Activated T-helper 2 cell treated with anti-CD3 and anti-CD28 coated beads, Interferon-gamma antibody, Interleukin-2, Interleukin-4, amounts not matched to agents 10 μg/mL and 5 μg/mL and 100 μg/mL, durations not matched to agents 14 hours and 24 hours and 36 hours (primary cell): ENCODE measurements at regions of chr2 and their contacts with region 1.

Region 1: DNA sequence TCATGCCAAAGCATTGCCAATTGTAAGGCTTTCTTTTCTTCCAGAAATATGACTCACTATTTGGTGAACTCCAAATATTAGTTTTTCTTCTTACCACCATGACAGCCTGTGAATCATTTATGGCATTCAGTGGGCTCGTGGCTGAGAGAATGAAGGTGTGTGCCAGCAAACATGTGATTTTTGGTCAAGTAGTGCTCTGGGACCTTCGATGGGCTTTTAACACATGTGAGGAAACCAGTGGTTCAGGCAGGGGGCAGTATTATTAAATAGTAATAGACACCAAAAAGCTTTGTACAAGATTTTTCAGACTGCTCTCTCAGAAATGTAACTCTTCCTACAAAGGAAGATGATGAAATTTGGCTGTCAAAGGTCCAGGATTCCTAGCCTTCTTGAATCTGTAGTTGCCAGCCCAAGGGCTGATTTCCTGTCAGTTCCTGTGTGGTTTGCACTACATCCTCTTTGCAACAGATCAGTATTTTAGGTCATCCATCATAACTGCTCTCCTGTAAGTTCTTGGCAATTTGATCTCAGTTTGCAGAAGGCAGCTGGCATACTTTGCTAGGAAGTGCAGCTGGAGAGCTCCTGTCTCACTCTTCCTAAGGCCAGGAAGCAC is 64.3 kb downstream of the BABAM2 start:
- DNase-seq: no peak
- H3K4me3 Mint-ChIP-seq: peak overlapping the region; percentile 53
- H3K27ac Mint-ChIP-seq: peak overlapping the region; percentile 72
- H3K4me1 Mint-ChIP-seq: peaks cover 81% of the 10 kb centered on the region
- H3K27me3 Mint-ChIP-seq: no peaks in the 10 kb centered on the region

Region 2: DNA sequence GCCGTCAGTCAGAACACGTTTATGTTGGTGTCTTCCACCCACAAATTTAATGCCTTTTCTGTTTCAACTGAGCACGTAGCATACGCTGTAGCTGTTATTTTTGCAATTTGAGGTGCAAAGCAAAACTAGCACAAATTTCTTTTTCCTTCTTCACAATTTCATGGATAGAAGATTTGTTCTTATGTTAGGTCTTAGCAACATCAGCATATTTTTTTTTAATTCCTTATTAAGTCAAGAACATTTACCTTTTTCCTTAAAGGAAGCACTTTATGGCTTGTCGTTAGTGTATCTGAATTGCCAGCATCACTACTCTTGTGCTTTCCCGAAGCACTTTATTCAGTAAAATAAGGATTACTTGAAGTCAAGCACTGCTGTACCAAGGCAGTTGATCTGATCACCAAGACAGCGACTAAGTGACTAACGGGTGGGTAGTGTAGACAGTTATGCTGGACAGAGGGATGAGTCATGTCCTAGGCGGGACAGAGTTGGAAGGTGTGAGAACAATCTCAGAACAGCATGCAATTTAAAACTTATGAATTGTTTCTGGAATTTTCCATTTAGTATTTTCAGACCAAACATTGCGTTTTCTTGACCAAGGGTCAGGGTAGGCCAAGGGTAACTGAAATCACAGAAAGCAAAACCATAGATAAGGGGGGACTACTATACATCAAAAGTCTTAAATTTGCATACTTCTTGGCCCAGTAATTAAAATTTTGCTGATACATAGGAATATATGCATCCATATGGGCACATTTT is 51.0 kb before region 1 on chr2:
- intact Hi-C with region 1: loop called (anchors 2 kb)
- DNase-seq: no peak
- H3K4me3 Mint-ChIP-seq: no peak overlapping the region
- H3K27ac Mint-ChIP-seq: peak overlapping the region; percentile 1
- H3K4me1 Mint-ChIP-seq: peaks cover 63% of the 10 kb centered on the region
- H3K27me3 Mint-ChIP-seq: no peaks in the 10 kb centered on the region

Region 3: DNA sequence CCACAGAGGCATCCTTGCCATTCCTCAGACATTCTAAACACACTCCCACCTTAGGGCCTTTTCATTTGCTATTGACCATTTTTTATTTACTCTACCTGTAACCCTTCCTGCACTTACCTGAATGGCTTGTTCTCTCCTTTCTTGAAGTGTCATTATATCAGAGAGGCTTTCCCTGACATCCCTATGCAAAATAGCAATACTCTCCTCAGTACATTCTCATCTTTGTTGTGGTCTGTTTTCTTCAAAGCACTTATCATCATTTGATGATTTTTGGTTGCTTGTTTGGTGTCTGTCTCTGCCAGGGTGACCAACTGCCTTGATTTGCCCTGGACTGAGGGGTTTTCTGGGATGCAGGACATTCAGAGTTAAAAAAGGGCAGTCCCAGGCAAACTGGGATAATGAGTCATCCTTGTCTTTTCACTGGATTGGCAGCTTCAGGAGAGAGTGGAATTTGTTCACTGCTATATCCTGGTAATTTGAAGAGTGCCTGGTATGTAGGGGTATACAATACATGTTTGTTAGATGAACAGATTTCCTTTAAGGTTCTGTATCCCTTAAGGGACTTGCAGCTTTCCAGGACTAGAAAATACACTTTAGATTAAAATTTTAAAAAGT is 38.0 kb after region 1 on chr2:
- intact Hi-C with region 1: no loop called
- DNase-seq: no peak
- H3K4me3 Mint-ChIP-seq: no peak overlapping the region
- H3K27ac Mint-ChIP-seq: no peak overlapping the region
- H3K4me1 Mint-ChIP-seq: peaks cover 23% of the 10 kb centered on the region
- H3K27me3 Mint-ChIP-seq: no peaks in the 10 kb centered on the region

Region 4: GRCh38 chr2:28004086-28004485 is 49.2 kb after region 1 on chr2:
- intact Hi-C with region 1: loop called (anchors 1 kb)
- DNase-seq: no peak
- H3K4me3 Mint-ChIP-seq: no peak overlapping the region
- H3K27ac Mint-ChIP-seq: peak overlapping the region; percentile 38
- H3K4me1 Mint-ChIP-seq: peaks cover 29% of the 10 kb centered on the region
- H3K27me3 Mint-ChIP-seq: no peaks in the 10 kb centered on the region

Region 5: GRCh38 chr2:28276076-28276618 is 321.3 kb after region 1 on chr2:
- intact Hi-C with region 1: loop called (anchors 5 kb)
- DNase-seq: no peak
- H3K4me3 Mint-ChIP-seq: no peak overlapping the region
- H3K27ac Mint-ChIP-seq: peak overlapping the region; percentile 41
- H3K4me1 Mint-ChIP-seq: peaks cover 48% of the 10 kb centered on the region
- H3K27me3 Mint-ChIP-seq: no peaks in the 10 kb centered on the region